ENCODE measurements at regions of chr6 and their contacts with region 1.

Region 1: GRCh38 chr6:36123257-36124139 is 6.8 kb upstream of the MAPK13 start:
- DNase-seq: peak; percentile 67
- H3K4me3 ChIP-seq: no peak overlapping the region
- H3K27ac ChIP-seq: no peak overlapping the region
- H3K4me1 ChIP-seq: peaks cover 8% of the 10 kb centered on the region
- H3K27me3 ChIP-seq: no peaks in the 10 kb centered on the region
- CTCF ChIP-seq: peak; percentile 60 to 82 (median 72)
- POLR2A ChIP-seq: no peak

Region 2: DNA sequence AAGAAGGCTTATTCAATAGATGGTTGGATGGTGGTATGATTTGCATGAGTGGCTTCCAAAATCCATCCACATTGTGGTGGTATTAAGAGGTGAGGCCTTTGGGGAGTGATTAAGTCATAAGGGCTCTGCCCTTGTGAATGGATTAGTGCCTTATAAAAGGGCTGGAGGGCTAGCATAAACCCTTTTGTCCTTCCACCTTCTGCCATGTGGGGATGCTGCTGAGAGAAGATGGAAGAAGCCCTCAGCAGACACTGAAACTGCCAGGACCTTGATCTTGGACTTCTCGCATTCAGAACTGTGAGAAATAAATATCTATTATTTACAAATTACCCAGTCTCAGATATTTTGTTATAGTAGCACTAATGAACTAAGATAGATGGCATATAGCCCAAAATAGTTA is 174.8 kb before region 1 on chr6:
- intact Hi-C with region 1: no loop called
- DNase-seq: no peak
- H3K4me3 ChIP-seq: no peak overlapping the region
- H3K27ac ChIP-seq: no peak overlapping the region
- H3K4me1 ChIP-seq: no peaks in the 10 kb centered on the region
- H3K27me3 ChIP-seq: no peaks in the 10 kb centered on the region
- CTCF ChIP-seq: no peak
- POLR2A ChIP-seq: no peak

Region 3: DNA sequence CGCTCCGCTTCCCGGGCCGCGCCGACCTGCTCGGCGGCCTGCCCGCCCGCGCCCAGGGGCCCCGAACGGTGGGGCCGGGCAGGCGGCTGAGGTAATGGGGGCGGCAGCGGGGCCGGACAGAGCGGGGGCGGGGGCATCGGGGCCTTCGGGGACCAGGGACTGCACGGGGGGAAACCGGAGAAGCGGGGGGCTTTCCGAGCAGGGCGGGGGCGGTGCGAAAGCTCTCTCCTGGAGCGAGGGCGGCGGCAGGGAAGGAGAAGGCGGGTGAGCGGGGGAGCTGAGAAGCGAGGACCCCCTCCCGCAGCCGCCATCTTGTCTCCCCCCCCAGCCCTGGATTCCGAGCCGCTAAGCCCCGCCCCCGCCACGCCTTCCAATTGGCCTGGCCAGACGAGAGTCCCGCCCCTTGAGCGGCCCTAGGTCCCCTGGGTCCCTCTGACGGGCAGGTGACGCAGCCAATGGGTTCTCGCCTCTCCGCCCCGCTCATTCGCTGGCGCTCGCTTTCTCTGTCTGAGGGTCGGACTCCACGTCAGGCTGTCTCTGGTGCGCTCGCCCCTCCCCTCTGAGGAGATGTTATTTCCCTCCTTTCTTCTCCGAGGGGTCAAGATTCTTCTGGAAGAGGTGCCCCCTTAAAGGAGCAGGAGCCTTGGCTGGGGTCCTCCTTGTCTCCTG is 73.5 kb after region 1 on chr6:
- intact Hi-C with region 1: loop called (anchors 5 kb)
- DNase-seq: peak; percentile 98
- H3K4me3 ChIP-seq: peak overlapping the region; percentile 81 to 89
- H3K27ac ChIP-seq: peak overlapping the region; percentile 96 to 99
- H3K4me1 ChIP-seq: peaks cover 6% of the 10 kb centered on the region
- H3K27me3 ChIP-seq: no peaks in the 10 kb centered on the region
- CTCF ChIP-seq: no peak
- POLR2A ChIP-seq: peak; percentile 61

Region 4: GRCh38 chr6:36350681-36351571 is 227.4 kb after region 1 on chr6:
- intact Hi-C with region 1: loop called (anchors 10 kb)
- DNase-seq: no peak
- H3K4me3 ChIP-seq: no peak overlapping the region
- H3K27ac ChIP-seq: no peak overlapping the region
- H3K4me1 ChIP-seq: no peaks in the 10 kb centered on the region
- H3K27me3 ChIP-seq: no peaks in the 10 kb centered on the region
- CTCF ChIP-seq: no peak
- POLR2A ChIP-seq: no peak